Colonic mucosa (tissue), 4 donors: ENCODE measurements at regions of chr19 and their contacts with region 1.

Region 1: GRCh38 chr19:7674010-7675005 is 2.6 kb upstream of the MCEMP1 start:
- DNase-seq: peak; percentile 86
- H3K4me3 ChIP-seq: no peak overlapping the region
- H3K27ac ChIP-seq: no peak overlapping the region
- H3K4me1 ChIP-seq: no peaks in the 10 kb centered on the region
- H3K27me3 ChIP-seq: peaks cover 3% of the 10 kb centered on the region
- CTCF ChIP-seq: no peak

Region 2: GRCh38 chr19:7349961-7350711 is 324.2 kb before region 1 on chr19:
- intact Hi-C with region 1: loop called (anchors 10 kb)
- DNase-seq: no peak
- H3K4me3 ChIP-seq: no peak overlapping the region
- H3K27ac ChIP-seq: no peak overlapping the region
- H3K4me1 ChIP-seq: no peaks in the 10 kb centered on the region
- H3K27me3 ChIP-seq: no peaks in the 10 kb centered on the region
- CTCF ChIP-seq: no peak

Region 3: DNA sequence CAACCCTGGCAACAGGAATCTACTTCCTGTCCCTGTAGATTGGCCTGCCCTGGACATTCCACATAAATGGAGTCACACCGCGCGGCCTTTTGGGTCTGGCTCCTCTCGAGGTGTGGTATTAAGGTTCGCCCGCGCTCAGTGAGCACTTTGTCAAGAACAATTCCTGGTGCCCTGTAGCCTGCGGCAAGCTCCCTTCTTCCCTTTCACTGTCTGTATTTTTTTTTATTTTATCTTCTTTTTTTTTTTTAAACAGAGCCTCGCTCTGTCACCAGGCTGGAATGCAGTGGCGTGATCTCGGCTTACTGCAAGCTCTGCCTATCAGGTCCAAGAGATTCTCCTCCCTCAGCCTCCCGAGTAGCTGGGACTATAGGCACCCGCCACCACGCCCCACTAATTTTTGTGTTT is 213.7 kb before region 1 on chr19:
- intact Hi-C with region 1: no loop called
- DNase-seq: no peak
- H3K4me3 ChIP-seq: no peak overlapping the region
- H3K27ac ChIP-seq: no peak overlapping the region
- H3K4me1 ChIP-seq: no peaks in the 10 kb centered on the region
- H3K27me3 ChIP-seq: no peaks in the 10 kb centered on the region
- CTCF ChIP-seq: no peak